ENCODE measurements at regions of chr1 and their contacts with region 1.

Region 1: GRCh38 chr1:3618881-3619671 is 5.7 kb upstream of the TPRG1L start:
- DNase-seq: no peak
- H3K4me3 ChIP-seq: no peak overlapping the region
- H3K27me3 ChIP-seq: no peaks in the 10 kb centered on the region
- CTCF ChIP-seq: peak; percentile 76

Region 2: GRCh38 chr1:3471302-3472087 is 147.6 kb before region 1 on chr1:
- CTCF ChIA-PET with region 1: interaction called, 37 read pairs
- POLR2A ChIA-PET with region 1: no interaction called
- DNase-seq: no peak
- H3K4me3 ChIP-seq: no peak overlapping the region
- H3K27me3 ChIP-seq: no peaks in the 10 kb centered on the region
- CTCF ChIP-seq: peak; percentile 68

Region 3: GRCh38 chr1:3491291-3492246 is 127.5 kb before region 1 on chr1:
- CTCF ChIA-PET with region 1: interaction called, 104 read pairs
- POLR2A ChIA-PET with region 1: no interaction called
- DNase-seq: no peak
- H3K4me3 ChIP-seq: no peak overlapping the region
- H3K27me3 ChIP-seq: no peaks in the 10 kb centered on the region
- CTCF ChIP-seq: peak; percentile 98

Region 4: GRCh38 chr1:3564921-3565827 is 53.9 kb before region 1 on chr1:
- CTCF ChIA-PET with region 1: interaction called, 39 read pairs
- POLR2A ChIA-PET with region 1: no interaction called
- DNase-seq: no peak
- H3K4me3 ChIP-seq: no peak overlapping the region
- H3K27me3 ChIP-seq: no peaks in the 10 kb centered on the region
- CTCF ChIP-seq: peak; percentile 98

Region 5: DNA sequence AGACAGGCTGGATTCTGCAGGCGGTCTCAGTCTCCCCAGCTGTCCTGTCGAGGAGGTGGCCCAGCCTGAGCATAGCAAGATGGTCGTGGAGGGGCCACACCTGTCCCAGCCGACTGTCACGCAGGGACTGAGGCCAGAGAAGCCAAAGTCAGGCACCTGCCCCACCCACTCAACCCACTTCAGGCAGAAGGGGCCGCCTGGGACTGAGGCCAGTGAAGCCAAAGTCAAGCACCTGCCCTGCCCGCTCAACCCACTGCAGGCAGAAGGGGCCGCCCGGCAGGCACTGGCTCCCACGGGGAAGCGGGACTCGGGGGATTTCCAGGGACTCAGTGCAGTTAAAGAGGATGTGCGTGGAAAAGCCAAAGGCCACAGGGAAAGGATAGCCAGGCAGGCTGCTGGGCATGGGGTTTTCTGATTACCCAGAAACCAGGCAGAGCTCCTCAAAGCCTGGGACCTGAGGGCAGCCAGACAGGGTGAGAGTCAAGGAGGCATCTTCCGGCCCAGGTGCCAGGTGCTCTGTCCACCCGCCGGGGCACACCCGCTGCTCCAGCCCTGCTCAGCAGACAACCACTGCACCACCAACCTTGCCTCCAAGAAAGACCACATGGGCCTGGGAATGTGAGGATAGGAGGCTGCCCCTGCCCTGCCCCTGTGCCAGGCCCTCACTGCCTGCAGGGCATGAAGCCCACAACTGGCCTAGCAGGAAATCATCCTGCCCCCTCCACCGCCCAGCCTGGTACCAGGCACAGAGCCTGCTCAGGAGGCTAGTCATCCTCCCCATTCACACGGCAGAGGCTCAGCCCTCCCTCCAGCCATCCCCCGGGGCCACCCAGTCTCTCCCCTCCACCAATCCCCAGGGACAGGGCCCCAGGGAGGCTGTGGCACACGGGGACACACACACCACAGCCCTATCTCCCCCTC is 48.8 kb before region 1 on chr1:
- CTCF ChIA-PET with region 1: interaction called, 39 read pairs
- POLR2A ChIA-PET with region 1: no interaction called
- DNase-seq: no peak
- H3K4me3 ChIP-seq: no peak overlapping the region
- H3K27me3 ChIP-seq: no peaks in the 10 kb centered on the region
- CTCF ChIP-seq: no peak

Region 6: DNA sequence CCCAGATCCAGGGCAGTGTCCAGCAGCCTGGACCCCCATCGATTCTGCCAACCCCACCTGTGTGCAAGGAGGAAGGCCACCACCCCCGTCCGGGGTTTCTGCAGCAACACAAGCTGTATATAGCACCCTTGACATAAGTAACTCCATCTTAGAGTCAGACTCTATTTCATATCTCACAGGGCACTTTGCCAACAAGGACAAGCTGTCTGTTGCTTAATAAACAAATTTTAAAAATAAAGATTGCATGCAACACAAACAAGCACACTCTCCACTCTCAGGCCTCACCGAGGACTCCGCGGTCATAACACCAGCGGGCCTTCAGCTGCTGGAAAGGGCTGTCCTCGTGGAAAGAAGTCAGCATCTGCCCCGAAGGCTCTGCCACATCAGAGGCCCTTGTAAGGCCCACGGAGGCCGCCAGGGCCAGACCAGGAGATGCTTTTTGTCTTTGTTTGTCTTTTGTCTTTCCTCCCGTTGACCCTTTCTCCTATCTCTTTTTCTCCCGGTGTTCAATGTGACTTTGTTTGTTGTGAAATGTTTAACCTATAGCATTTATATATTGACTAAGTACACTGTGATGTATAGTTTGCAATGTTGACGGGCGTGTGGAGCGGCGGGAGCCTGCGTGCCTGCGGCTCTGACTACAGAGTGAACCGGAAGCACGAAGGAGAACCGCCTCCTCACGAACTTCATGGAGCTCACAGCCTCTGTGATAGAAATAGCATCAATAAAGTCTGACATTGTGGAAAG is 32.0 kb before region 1 on chr1:
- CTCF ChIA-PET with region 1: interaction called, 11 read pairs
- POLR2A ChIA-PET with region 1: no interaction called
- DNase-seq: peak; percentile 15
- H3K4me3 ChIP-seq: no peak overlapping the region
- H3K27me3 ChIP-seq: no peaks in the 10 kb centered on the region; the same call in 1 of the 2 replicates
- CTCF ChIP-seq: no peak; the same call in 1 of the 2 replicates

Region 7: DNA sequence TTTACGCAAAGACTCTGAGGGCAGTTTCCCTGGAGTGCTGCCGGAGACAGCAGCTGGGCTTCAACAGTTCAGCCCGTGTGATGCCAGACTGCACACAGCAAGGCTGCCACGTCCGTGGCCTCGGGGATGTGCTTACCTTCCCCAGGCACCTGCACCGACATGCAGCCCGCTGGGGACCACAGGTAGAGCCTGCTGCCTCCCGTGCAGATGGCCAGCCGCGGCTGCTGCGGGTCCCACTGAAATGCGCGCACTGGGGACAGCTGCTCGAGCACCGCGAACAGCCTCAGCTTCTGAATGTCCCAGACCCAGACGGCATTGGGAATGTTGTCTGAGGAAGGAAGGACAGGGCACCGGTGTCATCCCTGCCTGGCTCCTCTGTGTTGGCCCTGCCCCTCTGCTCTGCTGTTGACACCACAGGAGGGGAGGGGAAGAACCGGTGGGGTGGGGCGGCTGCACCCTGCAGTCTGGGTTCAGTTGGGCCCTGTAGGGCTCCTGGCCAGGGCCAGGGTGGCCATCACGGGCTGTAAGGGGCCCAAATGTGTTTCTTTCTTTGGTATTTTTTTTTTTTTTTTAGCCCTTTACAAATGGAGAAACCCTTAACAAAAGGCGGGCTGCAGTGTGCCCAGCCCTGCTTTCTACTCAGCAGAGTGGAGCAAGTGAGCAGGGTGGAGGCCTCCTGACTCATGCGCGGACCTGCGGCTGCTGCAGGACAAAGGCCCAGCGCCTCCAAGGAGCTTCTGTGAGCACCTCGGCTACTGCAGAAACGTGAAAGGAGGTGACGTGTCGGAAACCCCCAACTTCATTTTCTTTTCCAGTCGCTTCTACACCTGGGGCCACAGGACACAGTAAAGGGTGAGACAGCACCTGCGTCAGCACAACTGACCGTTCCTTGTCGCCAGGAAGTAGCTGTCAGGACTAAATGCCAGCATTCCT is 12.5 kb after region 1 on chr1:
- CTCF ChIA-PET with region 1: interaction called, 12 read pairs
- POLR2A ChIA-PET with region 1: no interaction called
- DNase-seq: no peak
- H3K4me3 ChIP-seq: no peak overlapping the region
- H3K27me3 ChIP-seq: no peaks in the 10 kb centered on the region
- CTCF ChIP-seq: no peak

Measured in BJ (cell line).